Naive thymus-derived CD4-positive, alpha-beta T cell (primary cell): ENCODE measurements at regions of chr12 and their contacts with region 1.

Region 1: GRCh38 chr12:31922341-31923062 is 36.7 kb upstream of the RESF1 start:
- DNase-seq: peak in 1 of 9 donors; percentile 7
- ATAC-seq: no peak
- H3K4me3 ChIP-seq: no peak overlapping the region
- H3K4me3 Mint-ChIP-seq: no peak overlapping the region
- H3K27ac ChIP-seq: no peak overlapping the region
- H3K27ac Mint-ChIP-seq: peak overlapping the region in 4 of 9 donors; percentile 20 to 61 (median 44)
- H3K4me1 ChIP-seq: peaks cover under 1 to 3% of the 10 kb centered on the region in 2 donors
- H3K4me1 Mint-ChIP-seq: peaks cover 1 to 8% (median 4%) of the 10 kb centered on the region in 7 donors
- H3K27me3 ChIP-seq: no peaks in the 10 kb centered on the region
- H3K27me3 Mint-ChIP-seq: no peaks in the 10 kb centered on the region

Region 2: DNA sequence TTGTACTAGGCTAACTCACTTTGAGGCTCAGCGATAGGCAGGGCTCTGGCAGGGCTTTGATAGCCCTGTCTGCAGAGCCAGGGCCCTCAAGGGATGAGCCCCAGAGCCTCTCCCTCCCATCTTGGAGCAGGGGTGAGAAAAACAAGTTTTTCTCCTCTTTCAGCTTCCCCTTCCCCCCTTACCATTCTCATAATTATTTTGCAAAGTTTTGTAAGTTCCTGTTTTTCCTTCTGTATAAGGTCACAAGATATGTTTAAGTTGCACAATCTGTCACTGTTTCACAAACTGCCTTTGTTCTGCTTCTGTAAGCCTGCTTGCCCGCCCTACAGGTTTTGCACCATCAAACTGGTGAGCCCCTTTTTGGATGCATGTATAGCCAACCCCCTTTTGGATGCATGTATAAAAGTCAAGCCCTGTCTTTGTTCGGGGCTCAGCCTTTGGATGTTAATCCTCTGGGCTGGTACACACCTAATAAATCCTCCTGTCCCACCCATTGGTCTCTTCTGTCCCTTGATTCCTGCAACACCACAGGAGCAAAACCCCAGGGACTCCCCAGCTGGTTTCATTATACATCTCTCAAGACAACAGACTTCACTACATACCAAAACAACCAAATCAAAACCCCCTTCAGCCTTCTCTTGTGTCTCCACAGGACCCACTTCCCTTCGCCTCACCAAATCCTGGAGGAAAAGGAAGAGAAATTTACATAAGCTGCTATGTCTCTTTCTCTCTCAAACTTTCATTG is 15.8 kb before region 1 on chr12:
- CTCF ChIA-PET with region 1: interaction called, 3 read pairs
- POLR2A ChIA-PET with region 1: interaction called, 5 read pairs
- intact Hi-C with region 1: loop called in 1 of 2 experiments (anchors 2 kb)
- DNase-seq: no peak
- ATAC-seq: peak; percentile 37
- H3K4me3 ChIP-seq: no peak overlapping the region
- H3K4me3 Mint-ChIP-seq: peak overlapping the region in 2 of 10 donors; percentile 28 to 49
- H3K27ac ChIP-seq: no peak overlapping the region
- H3K27ac Mint-ChIP-seq: peak overlapping the region in 8 of 9 donors; percentile 9 to 77 (median 42)
- H3K4me1 ChIP-seq: no peaks in the 10 kb centered on the region
- H3K4me1 Mint-ChIP-seq: peaks cover 9 to 40% (median 23%) of the 10 kb centered on the region in 7 donors
- H3K27me3 ChIP-seq: no peaks in the 10 kb centered on the region
- H3K27me3 Mint-ChIP-seq: no peaks in the 10 kb centered on the region